Endothelial cell of umbilical vein (primary cell): ENCODE measurements at regions of chr6 and their contacts with region 1.

Region 1: GRCh38 chr6:148440877-148441453 is 98.3 kb downstream of the SASH1 start:
- DNase-seq: peak; percentile 86
- H3K4me3 ChIP-seq: no peak overlapping the region
- H3K27ac ChIP-seq: peak overlapping the region; percentile 98
- H3K4me1 ChIP-seq: peaks cover 62% of the 10 kb centered on the region
- H3K27me3 ChIP-seq: no peaks in the 10 kb centered on the region
- CTCF ChIP-seq: no peak
- POLR2A ChIP-seq: no peak

Region 2: GRCh38 chr6:148271711-148272439 is 169.1 kb before region 1 on chr6:
- CTCF ChIA-PET with region 1: interaction called, 3 read pairs
- POLR2A ChIA-PET with region 1: no interaction called
- dilution Hi-C with region 1: no loop called
- intact Hi-C with region 1: loop called (anchors 1 kb)
- DNase-seq: peak; percentile 89
- H3K4me3 ChIP-seq: peak overlapping the region in 1 of 3 experiments; percentile 45
- H3K27ac ChIP-seq: peak overlapping the region; percentile 93
- H3K4me1 ChIP-seq: peaks cover 47% of the 10 kb centered on the region
- H3K27me3 ChIP-seq: no peaks in the 10 kb centered on the region
- CTCF ChIP-seq: no peak
- POLR2A ChIP-seq: peak; percentile 33

Region 3: GRCh38 chr6:148398244-148398643 is 42.7 kb before region 1 on chr6:
- CTCF ChIA-PET with region 1: interaction called, 8 read pairs
- POLR2A ChIA-PET with region 1: interaction called, 3 read pairs
- dilution Hi-C with region 1: no loop called
- intact Hi-C with region 1: loop called (anchors 1 kb)
- DNase-seq: peak; percentile 95
- H3K4me3 ChIP-seq: peak overlapping the region in 1 of 3 experiments; percentile 3
- H3K27ac ChIP-seq: peak overlapping the region; percentile 98
- H3K4me1 ChIP-seq: peaks cover 41% of the 10 kb centered on the region
- H3K27me3 ChIP-seq: no peaks in the 10 kb centered on the region
- CTCF ChIP-seq: no peak
- POLR2A ChIP-seq: peak; percentile 52

Region 4: GRCh38 chr6:148407372-148407771 is 33.6 kb before region 1 on chr6:
- CTCF ChIA-PET with region 1: interaction called, 12 read pairs
- POLR2A ChIA-PET with region 1: no interaction called
- dilution Hi-C with region 1: no loop called
- intact Hi-C with region 1: loop called (anchors 1 kb)
- DNase-seq: peak; percentile 97
- H3K4me3 ChIP-seq: no peak overlapping the region
- H3K27ac ChIP-seq: peak overlapping the region; percentile 92
- H3K4me1 ChIP-seq: peaks cover 39% of the 10 kb centered on the region
- H3K27me3 ChIP-seq: no peaks in the 10 kb centered on the region
- CTCF ChIP-seq: no peak
- POLR2A ChIP-seq: no peak

Region 5: DNA sequence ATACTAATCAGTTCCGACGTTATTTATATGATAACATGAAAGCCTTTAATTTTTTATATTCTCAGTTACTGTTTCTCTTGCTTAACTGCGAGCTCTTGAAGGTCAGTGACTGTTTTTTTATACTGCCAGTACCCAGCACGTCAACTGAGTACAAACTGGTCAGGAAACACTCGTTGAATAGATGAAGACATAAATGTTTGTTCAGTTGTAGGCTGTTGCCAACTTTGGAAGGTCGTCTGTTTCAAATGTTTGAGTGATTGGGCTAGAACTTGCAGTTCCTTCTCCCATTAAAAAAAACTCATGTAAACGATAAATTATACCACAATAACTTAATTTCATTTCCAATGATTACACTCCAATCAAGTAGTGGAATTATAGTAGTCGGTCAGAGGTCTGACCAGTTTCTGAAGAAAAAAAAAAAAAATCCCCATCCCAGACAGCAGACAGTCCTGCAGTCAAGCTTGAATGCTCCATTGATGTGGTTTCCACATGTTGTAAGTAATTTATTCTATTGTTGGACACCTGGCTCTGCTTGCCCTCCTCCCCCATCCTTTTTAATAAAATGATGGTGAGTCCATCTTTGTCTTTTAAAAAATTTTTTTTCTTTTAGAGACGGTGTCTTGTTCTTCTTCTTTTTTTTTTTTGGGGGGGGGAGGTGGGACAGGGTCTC is 17.2 kb before region 1 on chr6:
- CTCF ChIA-PET with region 1: interaction called, 8 read pairs
- POLR2A ChIA-PET with region 1: interaction called, 4 read pairs
- dilution Hi-C with region 1: no loop called
- intact Hi-C with region 1: loop called (anchors 1 kb)
- DNase-seq: peak; percentile 96
- H3K4me3 ChIP-seq: no peak overlapping the region
- H3K27ac ChIP-seq: peak overlapping the region; percentile 75
- H3K4me1 ChIP-seq: peaks cover 69% of the 10 kb centered on the region
- H3K27me3 ChIP-seq: no peaks in the 10 kb centered on the region
- CTCF ChIP-seq: no peak
- POLR2A ChIP-seq: peak; percentile 54

Region 6: DNA sequence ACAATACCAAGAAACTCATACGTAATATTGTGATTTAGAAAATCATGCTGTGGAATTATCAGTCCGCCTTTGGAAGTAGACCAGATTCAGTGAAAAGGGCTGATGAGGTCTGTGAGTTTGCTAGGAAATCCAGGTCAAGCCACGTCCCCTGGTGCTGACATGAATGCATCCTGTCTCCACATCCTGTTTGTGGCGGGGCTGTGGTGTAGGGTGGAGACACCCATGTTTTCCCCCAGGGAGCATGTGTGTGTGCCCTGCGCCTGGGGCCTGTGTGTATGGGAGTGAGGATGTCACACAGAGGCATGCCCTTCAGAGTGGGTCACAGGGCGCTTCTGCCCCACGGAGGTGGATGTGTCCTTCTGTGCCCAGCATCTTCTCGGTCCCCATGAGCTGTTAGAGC is 10.7 kb after region 1 on chr6:
- CTCF ChIA-PET with region 1: interaction called, 5 read pairs
- POLR2A ChIA-PET with region 1: interaction called, 5 read pairs
- dilution Hi-C with region 1: no loop called
- intact Hi-C with region 1: loop called (anchors 1 kb)
- DNase-seq: no peak
- H3K4me3 ChIP-seq: no peak overlapping the region
- H3K27ac ChIP-seq: peak overlapping the region; percentile 61
- H3K4me1 ChIP-seq: peaks cover 85% of the 10 kb centered on the region
- H3K27me3 ChIP-seq: no peaks in the 10 kb centered on the region
- CTCF ChIP-seq: no peak
- POLR2A ChIP-seq: peak; percentile 37